Activated CD4-positive, alpha-beta T cell treated with anti-CD3 and anti-CD28 coated beads for 36 hours (primary cell): ENCODE measurements at regions of chr2 and their contacts with region 1.

Region 1: GRCh38 chr2:19347619-19348562 is 10.5 kb downstream of the OSR1 start:
- DNase-seq: peak; percentile 97
- ATAC-seq: peak; percentile 92
- H3K4me3 Mint-ChIP-seq: peak overlapping the region; percentile 89
- H3K27ac Mint-ChIP-seq: peak overlapping the region; percentile 98
- H3K4me1 Mint-ChIP-seq: peaks cover 22% of the 10 kb centered on the region
- H3K27me3 Mint-ChIP-seq: peaks cover 27% of the 10 kb centered on the region

Region 2: DNA sequence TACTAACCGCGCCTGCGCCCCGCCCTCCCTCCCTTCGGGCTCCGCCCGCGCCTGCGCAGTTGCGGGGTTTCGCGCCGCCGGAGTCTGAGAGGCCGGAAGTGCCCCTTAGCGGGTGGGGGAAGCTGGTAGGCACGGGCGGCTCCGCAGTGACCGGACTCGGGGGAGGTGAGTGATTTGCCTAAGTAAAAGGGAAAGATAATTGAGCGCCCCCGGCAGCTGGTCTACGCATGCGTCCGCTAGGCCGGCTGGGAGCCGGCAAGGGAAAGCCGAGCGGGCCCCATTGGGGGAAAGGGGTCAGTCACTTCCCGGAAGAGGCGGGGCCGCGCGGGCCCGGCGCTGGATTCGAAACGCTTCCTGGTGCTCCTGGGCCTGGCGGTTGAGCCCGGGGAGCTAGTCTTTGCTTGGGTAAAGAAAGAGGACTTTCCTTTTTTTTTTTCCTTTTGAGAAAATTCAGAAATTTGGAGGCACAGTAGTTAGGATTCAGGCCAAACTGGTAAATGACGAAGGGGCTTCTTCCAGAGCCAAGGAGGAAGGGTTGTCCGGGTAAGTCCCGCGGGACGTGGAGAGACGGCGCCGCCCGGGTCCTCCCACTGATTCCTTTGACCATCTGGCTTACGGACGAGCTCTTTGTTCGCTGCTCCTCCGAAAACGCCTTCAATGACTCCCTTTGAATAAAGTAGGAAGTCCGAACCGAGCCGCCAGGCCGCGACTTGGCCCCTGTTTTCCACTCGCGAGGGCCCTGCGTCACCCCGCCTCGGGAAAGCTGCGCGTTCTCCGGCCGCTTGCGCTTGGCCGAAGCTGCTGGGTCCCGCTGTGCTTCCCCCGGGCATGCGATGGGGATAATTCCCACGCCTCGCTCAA is 1593.9 kb before region 1 on chr2 and contains the starts of genes GEN1 and SMC6:
- CTCF ChIA-PET with region 1: no interaction called
- POLR2A ChIA-PET with region 1: no interaction called
- intact Hi-C with region 1: loop called in 1 of 2 experiments (anchors 5 kb)
- DNase-seq: peak; percentile 95
- ATAC-seq: peak; percentile 90
- H3K4me3 Mint-ChIP-seq: peak within 1 kb of the TSS; percentile 91
- H3K27ac Mint-ChIP-seq: peak within 1 kb of the TSS; percentile 93
- H3K4me1 Mint-ChIP-seq: peaks cover 20% of the 10 kb centered on the region
- H3K27me3 Mint-ChIP-seq: no peaks in the 10 kb centered on the region
- total RNA-seq, gene GEN1: 21.9 to 25.4 TPM
- total RNA-seq, gene SMC6: 25.4 to 26.3 TPM

Region 3: GRCh38 chr2:19362755-19363473 is 15.0 kb after region 1 on chr2:
- CTCF ChIA-PET with region 1: interaction called, 34 read pairs
- POLR2A ChIA-PET with region 1: interaction called, 3 read pairs
- intact Hi-C with region 1: loop called (anchors 1 to 2 kb)
- DNase-seq: peak; percentile 74
- ATAC-seq: peak; percentile 59
- H3K4me3 Mint-ChIP-seq: peak overlapping the region; percentile 88
- H3K27ac Mint-ChIP-seq: peak overlapping the region; percentile 65
- H3K4me1 Mint-ChIP-seq: peaks cover 30% of the 10 kb centered on the region
- H3K27me3 Mint-ChIP-seq: peaks cover 57% of the 10 kb centered on the region

Region 4: DNA sequence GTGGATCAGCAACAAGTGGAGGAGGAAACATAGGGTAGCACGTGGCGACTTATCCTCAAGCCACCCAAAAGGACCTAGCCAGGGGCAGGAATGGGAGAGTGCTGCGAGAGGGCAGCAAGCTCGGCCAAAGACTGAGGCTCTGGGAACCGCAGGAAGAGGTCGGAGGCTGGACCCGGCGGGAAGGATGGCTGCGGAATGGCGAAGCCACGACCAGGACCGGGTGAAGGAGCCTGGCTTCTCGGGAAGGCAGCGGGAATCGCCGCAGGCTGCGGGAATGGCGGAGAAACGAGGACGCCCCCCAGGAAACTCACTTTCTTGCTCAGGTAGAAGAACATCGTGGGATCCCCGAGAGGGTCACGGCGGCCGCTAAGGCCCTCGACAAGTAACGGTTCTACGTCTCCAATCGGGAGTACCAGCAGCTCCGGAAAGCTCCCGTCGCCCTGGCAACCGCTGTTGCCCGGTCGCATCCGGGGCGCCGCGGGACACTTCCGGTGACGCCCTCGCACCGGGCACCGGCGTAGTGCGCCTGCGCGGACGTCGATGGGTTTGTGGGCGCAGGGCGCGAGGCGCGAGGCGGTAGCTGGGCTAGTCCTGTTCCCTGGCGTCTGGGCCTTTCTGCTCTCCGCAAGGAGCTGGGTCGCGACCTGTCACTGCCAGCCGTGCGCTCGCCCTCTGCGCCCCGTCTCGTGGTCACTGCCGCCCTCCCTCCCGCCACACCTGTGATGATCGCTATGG is 642.0 kb after region 1 on chr2 and contains the start of gene WDR35:
- CTCF ChIA-PET with region 1: no interaction called
- POLR2A ChIA-PET with region 1: no interaction called
- intact Hi-C with region 1: loop called in 1 of 2 experiments (anchors 1 kb)
- DNase-seq: peak; percentile 95
- ATAC-seq: peak; percentile 97
- H3K4me3 Mint-ChIP-seq: peak within 1 kb of the TSS; percentile 90
- H3K27ac Mint-ChIP-seq: peak within 1 kb of the TSS; percentile 75
- H3K4me1 Mint-ChIP-seq: peaks cover 28% of the 10 kb centered on the region
- H3K27me3 Mint-ChIP-seq: peaks cover 12% of the 10 kb centered on the region
- total RNA-seq, gene WDR35: 6.2 to 7.4 TPM

Region 5: DNA sequence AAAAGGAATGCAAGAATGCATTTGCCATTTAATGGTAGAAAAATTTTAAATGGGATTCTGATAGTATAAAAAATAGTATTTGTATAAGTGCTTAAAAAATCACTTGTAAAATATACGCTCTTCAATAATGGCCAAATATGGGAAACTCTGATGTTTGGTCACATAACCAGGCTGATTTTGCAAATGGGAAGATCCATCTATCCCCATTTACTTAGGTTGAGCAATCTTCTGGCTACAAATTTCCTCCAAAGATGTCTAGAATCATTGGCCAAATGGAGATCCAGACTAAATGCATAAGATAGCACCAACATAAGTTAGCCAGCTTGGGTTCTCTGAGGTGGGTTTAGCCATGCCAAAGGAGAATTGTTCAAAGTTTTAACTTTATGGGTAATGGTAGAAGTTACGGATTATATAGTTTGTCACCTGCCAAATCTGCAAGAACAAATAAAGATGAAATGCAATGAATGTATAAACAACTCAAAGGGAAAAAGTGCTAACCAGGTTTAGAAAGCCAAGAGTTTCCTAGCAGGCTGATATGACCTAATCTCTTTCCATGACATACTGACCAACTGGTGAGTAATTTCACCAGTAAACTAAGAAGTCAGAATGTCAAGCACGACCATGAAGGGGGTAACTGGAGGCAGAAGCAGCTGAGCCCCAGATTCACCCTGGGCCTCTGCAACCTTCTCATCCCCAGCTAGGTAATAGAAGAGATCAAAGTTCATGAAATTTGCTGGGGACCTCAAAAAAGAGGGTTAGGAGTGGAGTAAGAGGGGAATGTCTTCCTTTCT is 1108.9 kb after region 1 on chr2:
- CTCF ChIA-PET with region 1: no interaction called
- POLR2A ChIA-PET with region 1: no interaction called
- intact Hi-C with region 1: loop called in 1 of 2 experiments (anchors 5 kb)
- DNase-seq: peak; percentile 46
- ATAC-seq: peak; percentile 95
- H3K4me3 Mint-ChIP-seq: no peak overlapping the region
- H3K27ac Mint-ChIP-seq: peak overlapping the region; percentile 35
- H3K4me1 Mint-ChIP-seq: peaks cover 9% of the 10 kb centered on the region
- H3K27me3 Mint-ChIP-seq: peaks cover 32% of the 10 kb centered on the region

Region 6: DNA sequence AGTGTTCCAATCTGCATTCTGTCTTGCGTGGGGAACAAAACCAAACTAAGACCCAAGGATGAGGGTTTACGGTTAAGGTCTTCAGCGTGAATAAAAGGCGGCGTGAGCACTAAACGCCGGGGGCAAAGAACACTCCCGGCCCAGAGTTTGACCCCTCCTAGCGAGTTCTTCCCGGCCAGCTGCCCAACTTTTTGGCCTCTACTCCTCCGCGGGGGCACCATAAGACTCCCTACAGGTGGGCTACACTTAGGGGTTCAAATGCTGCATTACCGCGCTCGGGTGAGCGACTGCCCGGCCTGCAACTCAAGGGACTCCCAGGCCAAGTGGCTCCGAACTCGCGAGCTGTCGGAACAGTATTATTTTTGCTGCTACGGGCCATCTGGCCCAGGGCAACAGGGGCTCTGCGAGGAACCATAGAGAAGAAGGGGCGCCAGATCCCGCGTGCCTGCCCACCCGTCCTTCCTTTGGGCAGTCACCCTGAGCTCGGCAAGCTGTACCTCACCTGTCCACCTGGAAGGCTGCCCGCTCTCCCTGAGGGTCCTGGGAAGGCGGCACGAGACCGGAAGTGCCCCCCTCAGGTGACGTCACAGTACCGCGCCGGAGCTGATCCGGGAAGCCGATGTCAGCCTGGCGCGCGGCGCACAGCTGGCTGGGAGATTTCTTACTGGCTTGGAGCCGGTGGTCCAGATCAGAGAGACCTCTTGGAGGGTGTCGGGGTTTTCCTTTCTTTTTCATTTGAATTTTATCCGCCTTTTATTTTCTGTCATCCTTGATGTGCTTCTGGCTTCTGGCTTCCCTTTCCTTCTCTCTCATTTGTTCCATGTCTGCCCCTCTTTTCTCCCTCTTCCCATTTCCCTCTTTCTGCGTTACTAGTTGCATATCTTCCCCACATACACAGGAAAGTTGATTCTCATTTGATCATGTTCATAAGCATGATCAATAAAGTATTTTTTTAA is 1474.9 kb after region 1 on chr2 and contains the start of gene LDAH:
- CTCF ChIA-PET with region 1: no interaction called
- POLR2A ChIA-PET with region 1: no interaction called
- intact Hi-C with region 1: loop called in 1 of 2 experiments (anchors 2 kb)
- DNase-seq: peak; percentile 92
- ATAC-seq: peak; percentile 79
- H3K4me3 Mint-ChIP-seq: peak within 1 kb of the TSS; percentile 98
- H3K27ac Mint-ChIP-seq: peak within 1 kb of the TSS; percentile 99
- H3K4me1 Mint-ChIP-seq: peaks cover 26% of the 10 kb centered on the region
- H3K27me3 Mint-ChIP-seq: no peaks in the 10 kb centered on the region
- total RNA-seq, gene LDAH: 27.0 to 32.8 TPM